Colonic mucosa (tissue), 4 donors: ENCODE measurements at regions of chr13 and their contacts with region 1.

Region 1: DNA sequence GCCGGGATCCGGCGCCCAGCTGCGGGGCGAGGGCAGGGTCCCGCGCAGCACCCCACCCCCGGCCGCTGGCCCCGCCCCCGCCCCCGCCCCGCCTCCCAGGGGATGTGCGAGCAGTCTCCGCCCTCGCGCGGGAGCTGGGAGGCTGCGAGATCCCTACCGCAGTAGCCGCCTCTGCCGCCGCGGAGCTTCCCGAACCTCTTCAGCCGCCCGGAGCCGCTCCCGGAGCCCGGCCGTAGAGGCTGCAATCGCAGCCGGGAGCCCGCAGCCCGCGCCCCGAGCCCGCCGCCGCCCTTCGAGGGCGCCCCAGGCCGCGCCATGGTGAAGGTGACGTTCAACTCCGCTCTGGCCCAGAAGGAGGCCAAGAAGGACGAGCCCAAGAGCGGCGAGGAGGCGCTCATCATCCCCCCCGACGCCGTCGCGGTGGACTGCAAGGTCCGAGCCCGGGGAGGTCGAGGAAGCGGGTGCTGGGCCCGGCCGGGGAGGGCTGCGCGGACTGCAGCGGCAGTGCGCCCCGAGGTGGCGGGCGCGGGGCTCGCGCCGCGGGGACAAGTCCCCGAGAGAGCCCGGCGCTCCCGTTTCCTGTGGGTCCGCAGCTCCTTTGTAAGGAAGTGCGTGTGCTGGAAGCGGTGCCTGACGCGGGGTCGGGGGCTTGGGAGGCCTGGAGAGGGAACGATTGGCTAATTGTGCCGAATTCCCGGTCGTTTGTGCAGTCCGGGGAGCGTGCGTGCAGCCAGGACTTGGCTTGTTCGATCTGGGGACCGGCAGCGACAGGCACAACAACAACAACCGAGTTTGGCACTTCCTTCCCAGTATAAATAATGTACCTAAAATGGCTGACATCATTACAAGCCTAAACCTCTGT is at the start of gene ITM2B:
- DNase-seq: peak; percentile 84
- H3K4me3 ChIP-seq: peak within 1 kb of the TSS; percentile 94
- H3K27ac ChIP-seq: peak within 1 kb of the TSS; percentile 100
- H3K4me1 ChIP-seq: no peaks in the 10 kb centered on the region
- H3K27me3 ChIP-seq: no peaks in the 10 kb centered on the region
- CTCF ChIP-seq: peak; percentile 31
- total RNA-seq, gene ITM2B: 257 to 456 TPM

Region 2: GRCh38 chr13:48037346-48038173 is 195.7 kb before region 1 on chr13 and contains the start of gene NUDT15:
- intact Hi-C with region 1: no loop called
- DNase-seq: peak; percentile 94
- H3K4me3 ChIP-seq: peak within 1 kb of the TSS; percentile 60
- H3K27ac ChIP-seq: peak within 1 kb of the TSS; percentile 93
- H3K4me1 ChIP-seq: peaks cover 5% of the 10 kb centered on the region
- H3K27me3 ChIP-seq: no peaks in the 10 kb centered on the region
- CTCF ChIP-seq: peak; percentile 95
- total RNA-seq, gene NUDT15: 24.5 to 43.8 TPM

Region 3: DNA sequence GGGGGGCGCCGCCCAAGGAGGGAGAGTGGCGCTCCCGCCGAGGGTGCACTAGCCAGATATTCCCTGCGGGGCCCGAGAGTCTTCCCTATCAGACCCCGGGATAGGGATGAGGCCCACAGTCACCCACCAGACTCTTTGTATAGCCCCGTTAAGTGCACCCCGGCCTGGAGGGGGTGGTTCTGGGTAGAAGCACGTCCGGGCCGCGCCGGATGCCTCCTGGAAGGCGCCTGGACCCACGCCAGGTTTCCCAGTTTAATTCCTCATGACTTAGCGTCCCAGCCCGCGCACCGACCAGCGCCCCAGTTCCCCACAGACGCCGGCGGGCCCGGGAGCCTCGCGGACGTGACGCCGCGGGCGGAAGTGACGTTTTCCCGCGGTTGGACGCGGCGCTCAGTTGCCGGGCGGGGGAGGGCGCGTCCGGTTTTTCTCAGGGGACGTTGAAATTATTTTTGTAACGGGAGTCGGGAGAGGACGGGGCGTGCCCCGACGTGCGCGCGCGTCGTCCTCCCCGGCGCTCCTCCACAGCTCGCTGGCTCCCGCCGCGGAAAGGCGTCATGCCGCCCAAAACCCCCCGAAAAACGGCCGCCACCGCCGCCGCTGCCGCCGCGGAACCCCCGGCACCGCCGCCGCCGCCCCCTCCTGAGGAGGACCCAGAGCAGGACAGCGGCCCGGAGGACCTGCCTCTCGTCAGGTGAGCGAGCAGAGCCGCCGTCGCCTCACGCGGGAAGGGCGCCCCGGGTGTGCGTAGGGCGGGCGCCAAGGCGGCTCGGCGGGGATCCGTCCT is 70.3 kb after region 1 on chr13 and contains the start of gene RB1:
- intact Hi-C with region 1: loop called (anchors 10 kb)
- DNase-seq: peak; percentile 92
- H3K4me3 ChIP-seq: peak within 1 kb of the TSS; percentile 86
- H3K27ac ChIP-seq: peak within 1 kb of the TSS; percentile 100
- H3K4me1 ChIP-seq: peaks cover 5% of the 10 kb centered on the region
- H3K27me3 ChIP-seq: no peaks in the 10 kb centered on the region
- CTCF ChIP-seq: no peak
- total RNA-seq, gene RB1: 28.5 TPM

Region 4: GRCh38 chr13:48667167-48667566 is 433.9 kb after region 1 on chr13:
- intact Hi-C with region 1: no loop called
- DNase-seq: no peak
- H3K4me3 ChIP-seq: no peak overlapping the region
- H3K27ac ChIP-seq: no peak overlapping the region
- H3K4me1 ChIP-seq: no peaks in the 10 kb centered on the region
- H3K27me3 ChIP-seq: no peaks in the 10 kb centered on the region
- CTCF ChIP-seq: no peak